Activated CD4-positive, alpha-beta T cell treated with anti-CD3 and anti-CD28 coated beads for 36 hours (primary cell): ENCODE measurements at regions of chr14 and their contacts with region 1.

Region 1: GRCh38 chr14:24299255-24300195 is at the starts of genes DHRS1 and NOP9:
- DNase-seq: peak; percentile 96
- ATAC-seq: peak; percentile 67
- H3K4me3 Mint-ChIP-seq: peak within 1 kb of the TSS; percentile 91
- H3K27ac Mint-ChIP-seq: peak within 1 kb of the TSS; percentile 77
- H3K4me1 Mint-ChIP-seq: peaks cover 51% of the 10 kb centered on the region
- H3K27me3 Mint-ChIP-seq: no peaks in the 10 kb centered on the region
- total RNA-seq, gene DHRS1: 11.7 to 14.6 TPM
- total RNA-seq, gene NOP9: 24.4 to 32.5 TPM

Region 2: DNA sequence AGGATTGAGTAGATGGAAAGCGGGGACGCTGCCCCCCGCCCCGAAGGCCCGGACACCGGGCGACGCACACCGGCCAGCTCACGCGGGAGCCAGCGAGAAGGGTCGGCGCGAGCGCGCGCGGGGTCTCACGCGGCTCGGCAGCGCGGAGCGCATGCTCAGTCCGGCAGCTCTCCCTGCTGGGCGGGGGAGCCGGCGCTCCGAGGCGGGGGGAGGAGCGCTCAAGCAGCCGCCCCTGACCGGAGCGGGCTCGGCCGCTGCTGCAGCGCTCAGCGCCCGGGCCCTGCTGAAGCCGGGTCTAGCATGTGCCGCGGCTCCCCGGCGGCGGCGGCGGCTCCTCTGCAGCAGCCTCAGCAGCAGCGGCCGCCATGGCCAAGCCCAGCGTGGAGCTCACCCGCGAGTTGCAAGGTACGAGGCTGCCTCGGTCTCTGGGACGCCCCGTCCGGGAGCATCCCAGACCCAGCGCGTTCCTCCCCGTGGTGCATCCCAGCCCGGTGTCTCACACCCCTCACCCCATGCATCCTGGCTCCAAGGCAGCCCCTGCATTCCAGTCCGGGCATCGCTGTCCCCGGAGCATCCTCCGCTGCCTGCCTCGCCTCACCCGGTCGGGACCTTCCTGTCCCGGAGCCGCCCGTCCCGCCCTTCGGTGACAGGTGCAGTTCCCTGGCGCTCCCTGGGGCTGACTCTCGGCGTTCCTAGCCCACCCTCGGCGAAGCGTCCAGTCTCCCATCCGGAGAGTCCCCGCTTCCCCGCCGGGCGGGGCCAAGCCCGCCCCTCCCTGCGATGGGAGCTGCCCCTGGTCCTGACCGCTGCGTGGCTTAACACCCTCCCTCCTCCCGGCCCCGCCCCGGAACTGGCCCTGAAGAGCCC is 247.5 kb before region 1 on chr14 and contains the start of gene CARMIL3:
- CTCF ChIA-PET with region 1: no interaction called
- POLR2A ChIA-PET with region 1: no interaction called
- intact Hi-C with region 1: loop called in 1 of 2 experiments (anchors 5 kb)
- DNase-seq: peak; percentile 77
- ATAC-seq: peak; percentile 57
- H3K4me3 Mint-ChIP-seq: peak within 1 kb of the TSS; percentile 57
- H3K27ac Mint-ChIP-seq: peak within 1 kb of the TSS; percentile 67
- H3K4me1 Mint-ChIP-seq: peaks cover 19% of the 10 kb centered on the region
- H3K27me3 Mint-ChIP-seq: peaks cover 8% of the 10 kb centered on the region
- total RNA-seq, gene CARMIL3: 0.74 to 0.91 TPM

Region 3: GRCh38 chr14:24188251-24189058 is 111.1 kb before region 1 on chr14 and contains the start of gene IPO4:
- CTCF ChIA-PET with region 1: interaction called, 7 read pairs
- POLR2A ChIA-PET with region 1: no interaction called
- intact Hi-C with region 1: loop called in 1 of 2 experiments (anchors 1 kb)
- DNase-seq: peak; percentile 97
- ATAC-seq: peak; percentile 92
- H3K4me3 Mint-ChIP-seq: peak within 1 kb of the TSS; percentile 89
- H3K27ac Mint-ChIP-seq: peak within 1 kb of the TSS; percentile 83
- H3K4me1 Mint-ChIP-seq: peaks cover 40% of the 10 kb centered on the region
- H3K27me3 Mint-ChIP-seq: no peaks in the 10 kb centered on the region
- total RNA-seq, gene IPO4: 73.4 to 73.7 TPM

Region 4: GRCh38 chr14:24232121-24232644 is 67.3 kb before region 1 on chr14 and contains the start of gene NEDD8:
- CTCF ChIA-PET with region 1: interaction called, 430 read pairs
- POLR2A ChIA-PET with region 1: no interaction called
- intact Hi-C with region 1: loop called in 1 of 2 experiments (anchors 1 kb)
- DNase-seq: peak; percentile 96
- ATAC-seq: peak; percentile 91
- H3K4me3 Mint-ChIP-seq: peak within 1 kb of the TSS; percentile 78
- H3K27ac Mint-ChIP-seq: peak within 1 kb of the TSS; percentile 89
- H3K4me1 Mint-ChIP-seq: peaks cover 58% of the 10 kb centered on the region
- H3K27me3 Mint-ChIP-seq: no peaks in the 10 kb centered on the region
- total RNA-seq, gene NEDD8: 187 to 217 TPM

Region 5: GRCh38 chr14:24310646-24311604 is 11.4 kb after region 1 on chr14 and contains the start of gene LTB4R:
- CTCF ChIA-PET with region 1: interaction called, 120 read pairs
- POLR2A ChIA-PET with region 1: interaction called, 3 read pairs
- intact Hi-C with region 1: loop called in 1 of 2 experiments (anchors 2 kb)
- DNase-seq: peak; percentile 81
- ATAC-seq: peak; percentile 83
- H3K4me3 Mint-ChIP-seq: peak within 1 kb of the TSS; percentile 70
- H3K27ac Mint-ChIP-seq: peak within 1 kb of the TSS; percentile 77
- H3K4me1 Mint-ChIP-seq: peaks cover 61% of the 10 kb centered on the region
- H3K27me3 Mint-ChIP-seq: no peaks in the 10 kb centered on the region
- total RNA-seq, gene LTB4R: 10.1 to 14.2 TPM